Colonic mucosa (tissue), 4 donors: ENCODE measurements at regions of chr18 and their contacts with region 1.

Region 1: DNA sequence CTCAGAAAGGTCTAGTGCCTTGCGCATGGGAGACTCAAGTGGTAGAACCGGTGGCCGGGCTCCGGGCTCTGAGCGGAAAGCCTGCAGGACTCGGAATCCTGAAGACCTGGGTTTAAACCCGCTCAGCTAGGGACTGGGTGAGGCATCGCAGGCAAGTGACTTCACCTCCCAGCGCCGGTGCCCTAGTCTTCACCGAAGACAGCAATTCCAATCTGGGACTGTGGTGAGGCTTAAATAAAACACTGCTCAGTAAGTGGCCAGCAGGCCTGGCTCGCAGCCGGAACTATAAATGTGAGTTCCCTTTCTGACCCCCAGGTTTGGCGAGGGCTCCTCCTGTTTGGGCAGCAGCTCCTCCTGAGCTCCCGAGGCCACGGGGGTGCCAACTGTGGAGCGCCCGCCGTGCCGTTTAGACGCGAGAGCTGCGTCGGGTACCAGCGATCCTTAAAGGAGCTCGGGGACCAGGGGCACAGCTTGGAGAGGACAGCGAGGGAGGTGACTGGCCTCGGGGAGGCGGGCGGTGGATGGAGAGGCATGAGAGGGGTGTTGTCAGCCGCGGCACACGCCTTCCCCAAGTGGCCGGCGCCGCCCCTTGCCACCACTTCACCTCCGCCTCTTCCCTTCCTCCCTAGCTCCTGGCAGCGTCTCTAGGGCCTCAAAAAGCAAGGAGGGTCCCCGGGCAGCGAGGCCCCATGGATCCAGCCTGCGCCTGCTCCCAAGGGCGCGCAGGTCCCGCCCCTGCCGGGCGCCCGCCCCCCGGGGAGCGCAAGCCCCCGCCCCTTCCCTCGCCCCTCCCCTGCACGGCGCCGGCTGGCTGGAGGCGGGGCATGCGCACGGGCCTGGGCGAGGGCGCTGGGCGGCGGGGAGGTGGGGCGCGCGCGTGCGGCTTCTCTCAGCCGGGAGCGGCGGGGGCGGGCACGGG is 736 bp upstream of the MTCL1 start:
- DNase-seq: peak; percentile 89
- H3K4me3 ChIP-seq: peak overlapping the region; percentile 55
- H3K27ac ChIP-seq: peak overlapping the region; percentile 75
- H3K4me1 ChIP-seq: peaks cover 15% of the 10 kb centered on the region
- H3K27me3 ChIP-seq: peaks cover 9% of the 10 kb centered on the region
- CTCF ChIP-seq: no peak

Region 2: DNA sequence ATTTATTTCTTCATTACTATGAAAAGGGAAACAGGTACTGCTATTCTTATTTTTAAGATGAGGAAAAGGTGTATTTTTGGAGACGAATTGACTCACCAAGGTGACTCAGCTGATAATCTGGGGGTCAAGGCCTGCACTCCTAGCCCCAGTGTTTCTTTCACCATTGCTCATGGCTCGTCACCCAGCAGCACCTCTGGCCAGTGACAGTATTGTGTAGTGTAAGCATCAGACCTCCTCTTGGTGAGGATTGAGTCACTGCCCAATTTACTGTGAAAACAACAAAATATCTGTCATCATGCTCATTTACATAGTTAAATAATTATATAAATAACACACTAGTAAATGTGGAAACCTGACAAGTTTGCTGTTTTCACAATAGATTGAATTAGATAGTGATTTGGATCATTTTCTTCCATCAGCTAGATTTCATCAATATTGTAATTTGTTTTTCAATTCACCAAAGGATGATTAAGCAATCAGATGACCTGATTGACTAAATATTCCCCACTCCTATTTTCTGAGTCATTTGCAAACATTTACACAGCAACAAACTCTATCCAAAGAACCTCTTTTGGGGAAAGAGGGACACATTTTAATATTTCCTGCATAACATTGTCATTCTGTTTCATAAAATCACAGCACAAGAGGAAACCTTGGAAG is 588.1 kb before region 1 on chr18:
- intact Hi-C with region 1: no loop called
- DNase-seq: no peak
- H3K4me3 ChIP-seq: no peak overlapping the region
- H3K27ac ChIP-seq: no peak overlapping the region
- H3K4me1 ChIP-seq: no peaks in the 10 kb centered on the region
- H3K27me3 ChIP-seq: no peaks in the 10 kb centered on the region
- CTCF ChIP-seq: no peak

Region 3: DNA sequence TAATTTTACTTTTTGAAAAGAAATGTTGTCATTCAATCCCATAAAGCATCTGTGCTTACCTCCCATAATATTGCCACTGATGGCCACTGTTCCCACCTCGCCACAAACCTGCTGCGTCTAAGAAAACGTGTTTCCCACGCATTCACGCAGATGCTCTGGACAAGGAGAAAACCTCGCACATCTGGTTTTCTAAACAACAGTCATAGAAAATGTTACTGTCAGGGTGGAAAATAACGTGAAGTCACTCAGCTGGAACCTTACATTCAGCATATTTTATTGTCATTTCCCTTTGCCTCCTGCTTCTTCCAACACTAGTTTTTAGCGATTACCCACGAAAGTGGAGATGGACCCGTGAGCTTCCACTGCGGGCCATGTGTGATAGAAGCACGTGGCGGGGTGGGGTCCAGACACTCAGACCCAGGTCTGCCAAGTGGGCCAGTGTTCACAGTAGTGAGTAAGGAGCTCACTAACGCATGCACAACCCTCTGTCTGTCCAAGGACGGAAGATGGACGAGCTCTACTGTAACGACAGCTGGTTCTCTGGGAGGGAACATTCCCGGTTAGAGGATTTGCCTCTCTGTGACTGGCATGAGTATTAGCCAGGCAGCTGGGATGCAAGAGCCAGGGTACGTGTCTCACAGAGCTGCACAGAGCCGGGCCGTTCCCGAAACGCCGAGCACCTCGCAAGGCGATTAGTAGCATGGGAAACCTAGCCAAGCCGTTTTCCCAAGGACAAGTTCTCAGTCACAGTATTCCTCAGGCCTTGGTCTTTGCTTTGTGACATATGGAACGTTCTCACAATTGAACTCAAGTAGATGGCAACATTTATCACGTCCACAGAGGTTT is 95.2 kb after region 1 on chr18:
- intact Hi-C with region 1: loop called (anchors 5 kb)
- DNase-seq: no peak
- H3K4me3 ChIP-seq: no peak overlapping the region
- H3K27ac ChIP-seq: peak overlapping the region; percentile 3
- H3K4me1 ChIP-seq: peaks cover 17% of the 10 kb centered on the region
- H3K27me3 ChIP-seq: no peaks in the 10 kb centered on the region
- CTCF ChIP-seq: no peak